Activated naive CD4-positive, alpha-beta T cell treated with anti-CD3 and anti-CD28 coated beads, Interleukin-2, amount 10 ng/mL, durations not matched to agents 7 days and 5 days (primary cell): ENCODE measurements at regions of chr10 and their contacts with region 1.

Region 1: GRCh38 chr10:93496322-93497041 is at the start of gene CEP55:
- DNase-seq: peak; percentile 97
- H3K4me3 Mint-ChIP-seq: peak within 1 kb of the TSS; percentile 83
- H3K27ac Mint-ChIP-seq: peak within 1 kb of the TSS; percentile 92
- H3K4me1 Mint-ChIP-seq: peaks cover 45% of the 10 kb centered on the region
- H3K27me3 Mint-ChIP-seq: peaks cover 4% of the 10 kb centered on the region

Region 2: GRCh38 chr10:93512565-93512964 is 16.1 kb after region 1 on chr10:
- CTCF ChIA-PET with region 1: interaction called, 103 read pairs
- DNase-seq: no peak
- H3K4me3 Mint-ChIP-seq: no peak overlapping the region
- H3K27ac Mint-ChIP-seq: no peak overlapping the region
- H3K4me1 Mint-ChIP-seq: peaks cover 2% of the 10 kb centered on the region
- H3K27me3 Mint-ChIP-seq: no peaks in the 10 kb centered on the region

Region 3: DNA sequence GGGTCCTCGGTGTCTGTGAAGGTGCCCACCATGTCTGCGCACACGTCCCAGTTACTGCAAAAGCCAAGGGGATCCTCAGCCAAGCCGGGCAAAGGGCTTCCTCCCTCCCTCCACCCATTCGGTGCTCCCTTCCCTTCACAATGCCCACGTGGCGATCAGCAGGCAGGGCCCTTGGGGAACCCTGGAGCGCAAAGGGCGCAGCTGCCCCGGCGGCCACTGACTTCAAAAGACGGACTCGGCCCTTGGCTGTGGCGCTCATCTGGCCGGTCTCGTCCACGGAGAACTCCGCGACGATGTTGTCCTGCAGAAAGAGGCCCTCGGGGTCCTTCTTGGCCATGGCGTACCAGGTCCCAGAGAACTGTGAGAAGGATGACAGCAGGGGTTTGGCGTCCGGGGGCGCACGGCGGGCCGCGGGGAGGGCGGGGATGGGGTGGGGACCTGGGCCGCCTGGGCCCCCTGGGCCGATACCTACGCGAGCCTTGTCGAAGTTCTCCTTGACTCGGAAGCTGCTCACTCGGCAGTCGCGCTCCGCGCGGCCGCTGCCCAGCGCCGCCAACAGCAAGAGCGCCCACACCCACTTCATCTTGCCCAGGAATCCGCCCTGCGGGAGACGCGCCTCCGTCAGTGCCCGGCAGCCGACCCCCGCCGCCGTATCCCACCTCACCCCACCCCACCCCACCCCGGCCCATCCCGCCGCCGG is 104.1 kb after region 1 on chr10:
- CTCF ChIA-PET with region 1: no interaction called
- DNase-seq: no peak
- H3K4me3 Mint-ChIP-seq: no peak overlapping the region
- H3K27ac Mint-ChIP-seq: no peak overlapping the region
- H3K4me1 Mint-ChIP-seq: no peaks in the 10 kb centered on the region
- H3K27me3 Mint-ChIP-seq: peaks cover 56% of the 10 kb centered on the region